GM12878 (cell line): ENCODE measurements at regions of chr18 and their contacts with region 1.

Region 1: DNA sequence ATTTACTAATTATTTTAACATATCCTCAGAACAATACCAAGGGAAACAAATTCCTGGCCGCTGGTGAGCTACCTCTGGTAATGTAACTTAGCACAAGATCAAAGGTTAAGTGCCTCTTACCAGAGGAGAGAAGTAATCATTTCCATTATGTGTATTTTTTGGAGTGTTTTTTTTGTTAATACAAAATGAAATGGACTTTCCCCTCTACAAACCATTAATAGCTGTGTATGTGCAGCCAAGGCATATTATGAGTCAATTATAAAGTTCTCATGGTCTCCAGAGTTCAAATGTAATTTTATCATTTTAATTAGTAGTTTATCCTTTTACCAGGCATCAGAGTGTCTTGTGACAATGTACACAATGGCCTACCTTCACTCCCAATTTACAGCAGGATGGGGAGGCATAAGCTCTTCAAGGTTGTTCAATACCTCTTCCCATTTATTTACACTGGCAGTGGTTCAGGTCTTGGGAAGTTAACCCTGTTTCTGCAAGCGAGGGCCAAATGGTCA is 242.2 kb downstream of the TGIF1 start:
- DNase-seq: no peak
- ATAC-seq: peak; percentile 59
- H3K4me3 ChIP-seq: no peak overlapping the region
- H3K27ac ChIP-seq: no peak overlapping the region
- H3K4me1 ChIP-seq: no peaks in the 10 kb centered on the region
- H3K27me3 ChIP-seq: no peaks in the 10 kb centered on the region
- CTCF ChIP-seq: no peak
- EP300 ChIP-seq: no peak
- POLR2A ChIP-seq: no peak
- RAD21 ChIP-seq: no peak

Region 2: GRCh38 chr18:3541549-3542386 is 150.4 kb before region 1 on chr18:
- CTCF ChIA-PET with region 1: no interaction called
- POLR2A ChIA-PET with region 1: no interaction called
- RAD21 ChIA-PET with region 1: no interaction called
- SMC1A ChIA-PET with region 1: no interaction called
- in situ Hi-C with region 1: no loop called
- intact Hi-C with region 1: no loop called
- DNase-seq: peak; percentile 27
- ATAC-seq: peak; percentile 95
- H3K4me3 ChIP-seq: no peak overlapping the region
- H3K27ac ChIP-seq: no peak overlapping the region
- H3K4me1 ChIP-seq: peaks cover 11% of the 10 kb centered on the region
- H3K27me3 ChIP-seq: no peaks in the 10 kb centered on the region
- CTCF ChIP-seq: no peak
- EP300 ChIP-seq: peak; percentile 65 to 81; a peak in 3 of 4 replicates
- POLR2A ChIP-seq: no peak
- RAD21 ChIP-seq: no peak

Region 3: GRCh38 chr18:3703732-3704176 is 11.6 kb after region 1 on chr18:
- CTCF ChIA-PET with region 1: interaction called, 25 read pairs
- POLR2A ChIA-PET with region 1: interaction called, 5 read pairs
- RAD21 ChIA-PET with region 1: no interaction called
- SMC1A ChIA-PET with region 1: interaction called, 3 read pairs
- in situ Hi-C with region 1: no loop called
- intact Hi-C with region 1: no loop called
- DNase-seq: no peak
- ATAC-seq: peak; percentile 79
- H3K4me3 ChIP-seq: no peak overlapping the region
- H3K27ac ChIP-seq: no peak overlapping the region
- H3K4me1 ChIP-seq: no peaks in the 10 kb centered on the region
- H3K27me3 ChIP-seq: no peaks in the 10 kb centered on the region
- CTCF ChIP-seq: peak; percentile 60 to 74 (median 61)
- EP300 ChIP-seq: no peak
- POLR2A ChIP-seq: no peak
- RAD21 ChIP-seq: peak; percentile 55

Region 4: DNA sequence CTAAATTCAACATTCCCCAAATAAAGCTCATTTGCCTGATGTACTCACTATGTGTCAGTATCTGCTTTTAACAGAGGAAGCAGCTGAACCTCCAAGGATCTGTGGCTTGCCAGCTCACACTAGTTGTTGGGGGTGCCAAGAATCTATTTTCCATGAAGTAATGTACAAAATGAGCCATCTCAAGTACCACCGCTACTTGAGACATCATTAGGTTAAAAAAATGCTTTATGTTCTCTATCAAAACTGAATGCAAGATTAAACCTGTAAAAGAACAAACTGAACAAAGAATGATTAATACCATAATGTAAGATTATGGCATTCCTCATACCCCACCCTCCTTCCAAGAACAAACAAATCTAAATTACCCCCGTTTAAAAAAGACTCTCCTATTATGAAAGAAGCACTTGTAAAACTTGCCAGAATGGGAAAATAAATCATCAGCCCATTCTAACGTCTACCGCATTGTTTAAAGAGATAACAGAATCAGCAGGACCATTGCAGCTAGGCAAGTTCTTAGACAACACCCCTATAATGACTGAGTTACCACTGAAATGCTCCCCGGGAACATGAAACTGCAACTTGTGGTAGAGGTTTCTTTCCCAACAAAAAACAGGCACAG is 291.3 kb after region 1 on chr18:
- CTCF ChIA-PET with region 1: no interaction called
- POLR2A ChIA-PET with region 1: no interaction called
- RAD21 ChIA-PET with region 1: no interaction called
- SMC1A ChIA-PET with region 1: no interaction called
- in situ Hi-C with region 1: no loop called
- intact Hi-C with region 1: loop called (anchors 5 kb)
- DNase-seq: no peak
- ATAC-seq: peak; percentile 11; the same call in 1 of the 3 replicates
- H3K4me3 ChIP-seq: no peak overlapping the region
- H3K27ac ChIP-seq: no peak overlapping the region
- H3K4me1 ChIP-seq: no peaks in the 10 kb centered on the region
- H3K27me3 ChIP-seq: no peaks in the 10 kb centered on the region
- CTCF ChIP-seq: no peak
- EP300 ChIP-seq: no peak
- POLR2A ChIP-seq: no peak
- RAD21 ChIP-seq: no peak